ENCODE measurements at regions of chr13 and their contacts with region 1.

Region 1: GRCh38 chr13:107271227-107271626 is 703.3 kb upstream of the ARGLU1 start:
- DNase-seq: peak in 1 of 2 donors; percentile 8
- ATAC-seq: peak in 1 of 8 donors; percentile 24
- H3K4me3 ChIP-seq: no peak overlapping the region
- H3K27ac ChIP-seq: no peak overlapping the region
- H3K4me1 ChIP-seq: no peaks in the 10 kb centered on the region
- H3K27me3 ChIP-seq: no peaks in the 10 kb centered on the region
- CTCF ChIP-seq: no peak

Region 2: GRCh38 chr13:107305178-107305577 is 34.0 kb after region 1 on chr13:
- intact Hi-C with region 1: loop called in 1 of 10 experiments (anchors 1 kb)
- DNase-seq: no peak
- ATAC-seq: no peak
- H3K4me3 ChIP-seq: no peak overlapping the region
- H3K27ac ChIP-seq: no peak overlapping the region
- H3K4me1 ChIP-seq: no peaks in the 10 kb centered on the region
- H3K27me3 ChIP-seq: no peaks in the 10 kb centered on the region
- CTCF ChIP-seq: no peak

Region 3: DNA sequence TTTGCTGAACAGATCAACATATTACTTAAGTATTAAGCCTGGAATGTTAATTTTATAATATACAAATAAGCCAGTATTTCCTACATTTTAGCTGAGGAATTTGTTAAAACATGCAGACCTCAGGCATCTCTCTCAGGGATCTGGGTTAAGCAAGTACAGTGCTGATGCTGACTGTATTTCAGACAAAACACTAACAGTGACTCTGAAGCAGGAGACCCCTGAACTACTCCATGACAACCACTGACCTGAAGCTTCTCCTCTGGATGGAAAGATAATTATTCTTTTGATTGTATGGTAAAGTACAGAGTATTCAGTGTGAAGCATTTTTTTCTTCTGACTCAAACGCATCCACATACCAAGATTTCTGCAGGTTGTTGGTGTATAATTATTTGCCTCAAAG is 263.3 kb after region 1 on chr13:
- intact Hi-C with region 1: no loop called
- DNase-seq: no peak
- ATAC-seq: no peak
- H3K4me3 ChIP-seq: no peak overlapping the region
- H3K27ac ChIP-seq: no peak overlapping the region
- H3K4me1 ChIP-seq: no peaks in the 10 kb centered on the region
- H3K27me3 ChIP-seq: no peaks in the 10 kb centered on the region
- CTCF ChIP-seq: no peak